IMR-90 (cell line): ENCODE measurements at regions of chr10 and their contacts with region 1.

Region 1: DNA sequence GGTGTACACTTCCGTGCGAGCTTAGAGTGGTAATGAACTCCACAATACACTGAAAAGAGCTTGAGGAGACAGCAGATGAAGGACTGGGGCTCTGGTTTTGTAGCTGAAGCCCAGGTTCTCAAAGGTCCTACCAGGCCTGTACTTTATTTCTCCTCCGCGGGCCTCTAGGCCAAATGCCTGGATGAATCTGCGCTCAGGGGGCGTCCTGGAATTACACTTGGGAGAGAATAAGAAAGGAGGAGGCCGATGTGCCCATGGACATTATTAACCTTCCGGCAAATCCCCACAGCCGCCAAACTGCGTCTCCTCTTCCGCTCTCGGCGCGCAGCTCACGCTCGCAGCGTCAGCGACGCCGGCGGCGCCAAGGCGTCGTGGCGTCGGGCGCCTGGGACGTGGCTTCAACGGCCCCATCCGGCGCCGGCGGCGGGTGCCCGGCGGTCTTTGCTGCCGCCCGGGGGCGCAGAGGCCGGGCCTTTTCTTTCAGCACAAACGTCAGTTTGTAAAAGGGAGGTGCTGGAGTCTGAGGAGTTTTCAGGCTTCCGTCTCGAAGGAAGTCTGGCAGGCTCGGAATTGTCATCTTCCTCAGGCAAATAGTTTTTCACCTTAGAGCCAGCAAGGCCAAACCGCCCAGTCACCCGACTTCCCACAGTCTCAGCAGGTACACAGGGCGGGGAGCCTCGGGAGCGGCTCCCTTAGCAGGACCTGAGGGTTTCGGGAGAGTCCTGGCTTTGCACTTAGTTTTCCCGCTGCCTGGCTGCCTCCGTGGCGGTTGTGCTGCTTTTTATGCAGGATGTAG is at the start of gene CCDC7:
- DNase-seq: peak; percentile 84
- ATAC-seq: peak; percentile 98
- H3K4me3 ChIP-seq: peak within 1 kb of the TSS; percentile 56
- H3K27ac ChIP-seq: peak within 1 kb of the TSS; percentile 87
- H3K4me1 ChIP-seq: no peaks in the 10 kb centered on the region; the same call in 1 of the 2 replicates
- H3K27me3 ChIP-seq: peaks cover 1% of the 10 kb centered on the region; the same call in 1 of the 2 replicates
- CTCF ChIP-seq: peak; percentile 68
- POLR2A ChIP-seq: peak; percentile 87
- RAD21 ChIP-seq: peak; percentile 48
- total RNA-seq, gene CCDC7: 3.9 and 4.3 TPM in 2 replicates

Region 2: DNA sequence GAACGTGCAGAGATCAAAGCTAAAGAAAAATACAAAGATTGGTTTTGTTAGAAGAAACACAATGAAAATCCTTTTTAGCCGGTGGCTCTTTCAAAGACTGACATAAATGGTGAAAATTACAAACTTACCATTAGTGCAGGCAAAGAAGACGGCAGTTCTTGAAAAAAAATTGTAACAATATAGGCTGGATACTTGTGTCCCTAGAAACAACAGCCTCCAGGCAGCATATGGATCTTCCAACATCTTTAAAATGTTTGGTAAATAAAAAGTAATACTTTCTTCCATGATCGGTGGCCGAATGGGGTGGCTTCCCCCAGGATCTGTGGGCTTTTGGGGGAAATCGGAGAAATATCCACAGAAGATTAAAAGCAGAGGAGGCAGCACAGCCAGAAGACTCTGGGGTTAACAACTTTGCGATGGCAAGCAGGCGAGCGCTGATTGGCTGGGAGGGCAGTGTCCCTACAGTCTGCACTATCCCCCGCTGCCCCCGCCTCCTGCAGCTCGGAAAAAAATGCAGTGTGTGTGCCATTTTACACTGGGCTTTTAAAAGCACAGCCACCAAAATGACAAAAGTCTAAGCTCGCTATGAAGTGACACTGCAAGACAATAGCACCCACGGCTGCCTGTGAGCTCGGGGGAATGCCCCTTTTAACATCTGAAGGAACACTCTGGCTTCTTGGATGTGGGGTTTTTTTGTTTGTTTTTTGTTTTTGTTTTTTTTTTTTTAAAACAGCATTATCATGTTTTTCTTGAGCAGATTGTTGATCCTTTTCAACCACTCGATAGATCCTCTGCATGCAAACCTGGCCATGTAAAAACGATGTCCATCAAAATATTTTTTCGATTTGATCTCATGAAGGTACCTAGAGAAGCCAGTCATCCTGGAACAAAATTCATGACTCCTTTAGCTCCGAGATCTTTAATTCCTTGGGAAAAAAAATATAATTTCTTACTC is 67.3 kb before region 1 on chr10:
- CTCF ChIA-PET with region 1: interaction called, 3 read pairs
- POLR2A ChIA-PET with region 1: no interaction called
- dilution Hi-C with region 1: no loop called
- in situ Hi-C with region 1: no loop called
- intact Hi-C with region 1: loop called (anchors 1 kb)
- DNase-seq: peak; percentile 85
- ATAC-seq: peak; percentile 97
- H3K4me3 ChIP-seq: peak overlapping the region; percentile 62
- H3K27ac ChIP-seq: peak overlapping the region; percentile 86
- H3K4me1 ChIP-seq: 0 out of 2 replicates have a peak, but pooled peaks cover 1% of the 10 kb centered on the region
- H3K27me3 ChIP-seq: no peaks in the 10 kb centered on the region
- CTCF ChIP-seq: no peak
- POLR2A ChIP-seq: peak; percentile 58; the same call in 1 of the 2 replicates
- RAD21 ChIP-seq: no peak

Region 3: GRCh38 chr10:32417911-32418547 is 27.9 kb before region 1 on chr10:
- CTCF ChIA-PET with region 1: no interaction called
- POLR2A ChIA-PET with region 1: no interaction called
- dilution Hi-C with region 1: no loop called
- in situ Hi-C with region 1: no loop called
- intact Hi-C with region 1: loop called (anchors 1 kb)
- DNase-seq: peak; percentile 89
- ATAC-seq: peak; percentile 75
- H3K4me3 ChIP-seq: no peak overlapping the region
- H3K27ac ChIP-seq: peak overlapping the region; percentile 91; the same call in 1 of the 2 replicates
- H3K4me1 ChIP-seq: peaks cover 7% of the 10 kb centered on the region
- H3K27me3 ChIP-seq: no peaks in the 10 kb centered on the region
- CTCF ChIP-seq: no peak
- POLR2A ChIP-seq: no peak
- RAD21 ChIP-seq: no peak

Region 4: GRCh38 chr10:32501896-32502295 is 56.0 kb after region 1 on chr10:
- CTCF ChIA-PET with region 1: no interaction called
- POLR2A ChIA-PET with region 1: no interaction called
- dilution Hi-C with region 1: no loop called
- in situ Hi-C with region 1: no loop called
- intact Hi-C with region 1: no loop called
- DNase-seq: no peak
- ATAC-seq: no peak
- H3K4me3 ChIP-seq: no peak overlapping the region
- H3K27ac ChIP-seq: no peak overlapping the region
- H3K4me1 ChIP-seq: no peaks in the 10 kb centered on the region
- H3K27me3 ChIP-seq: no peaks in the 10 kb centered on the region
- CTCF ChIP-seq: no peak
- POLR2A ChIP-seq: no peak
- RAD21 ChIP-seq: no peak